Calu3 (cell line): ENCODE measurements at regions of chr14 and their contacts with region 1.

Region 1: DNA sequence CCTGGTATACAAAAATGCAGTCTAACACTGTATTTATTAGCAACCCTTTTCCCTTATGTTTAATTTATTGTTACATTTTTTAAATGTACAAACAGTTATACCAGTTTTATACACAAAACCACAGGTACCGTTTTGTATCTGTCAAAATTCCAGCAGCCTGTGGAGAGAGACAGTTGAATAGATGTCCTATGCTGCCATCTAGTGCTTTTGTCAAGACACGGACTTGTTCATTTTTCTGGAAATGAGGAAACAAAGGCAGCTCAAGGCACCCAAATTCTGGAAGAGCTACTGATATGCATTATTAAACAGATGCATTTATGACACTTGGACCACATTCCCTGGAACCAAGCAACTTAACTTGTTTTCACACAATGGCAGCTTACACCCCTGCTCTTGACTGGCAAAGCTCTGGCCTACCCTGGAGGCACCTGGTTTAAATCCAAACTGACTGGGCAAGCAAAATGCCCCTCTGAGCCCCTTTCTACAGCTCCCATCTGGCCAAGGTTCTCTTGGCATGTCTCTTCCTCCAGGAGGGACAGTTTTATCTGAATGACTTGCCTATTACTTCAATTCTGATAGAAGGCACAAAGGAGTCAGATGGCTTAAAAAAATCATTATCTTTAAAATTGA is 286.9 kb upstream of the PRKD1 start:
- DNase-seq: peak; percentile 32
- H3K4me3 Mint-ChIP-seq: no peak overlapping the region
- H3K27ac Mint-ChIP-seq: no peak overlapping the region
- H3K4me1 Mint-ChIP-seq: no peaks in the 10 kb centered on the region
- H3K27me3 Mint-ChIP-seq: no peaks in the 10 kb centered on the region
- CTCF ChIP-seq: peak; percentile 63

Region 2: GRCh38 chr14:29536886-29537511 is 677.6 kb before region 1 on chr14:
- CTCF ChIA-PET with region 1: interaction called, 6 read pairs
- intact Hi-C with region 1: loop called (anchors 5 kb)
- DNase-seq: peak; percentile 4
- H3K4me3 Mint-ChIP-seq: no peak overlapping the region
- H3K27ac Mint-ChIP-seq: no peak overlapping the region
- H3K4me1 Mint-ChIP-seq: no peaks in the 10 kb centered on the region
- H3K27me3 Mint-ChIP-seq: peaks cover 11% of the 10 kb centered on the region
- CTCF ChIP-seq: peak; percentile 38

Region 3: GRCh38 chr14:30005114-30005808 is 209.3 kb before region 1 on chr14:
- CTCF ChIA-PET with region 1: no interaction called
- intact Hi-C with region 1: loop called (anchors 2 kb)
- DNase-seq: peak; percentile 8
- H3K4me3 Mint-ChIP-seq: no peak overlapping the region
- H3K27ac Mint-ChIP-seq: no peak overlapping the region
- H3K4me1 Mint-ChIP-seq: no peaks in the 10 kb centered on the region
- H3K27me3 Mint-ChIP-seq: no peaks in the 10 kb centered on the region
- CTCF ChIP-seq: peak; percentile 41

Region 4: DNA sequence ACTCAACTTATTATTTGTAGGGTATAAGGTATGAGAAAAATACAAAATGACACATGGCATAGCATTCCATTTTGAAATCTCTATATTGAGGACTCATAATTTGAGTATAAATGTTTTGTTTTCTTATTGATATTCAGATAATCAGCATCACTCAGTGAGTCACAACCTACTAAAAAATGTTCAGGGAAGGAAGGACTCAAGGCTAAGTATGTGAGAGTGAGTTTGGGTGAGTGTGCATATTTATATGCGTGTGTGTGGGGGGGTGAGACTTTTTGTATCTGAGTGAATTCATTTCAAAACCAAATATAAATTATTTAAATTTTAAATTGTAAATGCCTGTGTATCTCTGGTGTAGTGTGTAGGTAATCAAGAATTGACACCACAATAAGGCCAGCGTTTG is 199.1 kb before region 1 on chr14:
- CTCF ChIA-PET with region 1: no interaction called
- intact Hi-C with region 1: loop called (anchors 5 kb)
- DNase-seq: no peak
- H3K4me3 Mint-ChIP-seq: no peak overlapping the region
- H3K27ac Mint-ChIP-seq: no peak overlapping the region
- H3K4me1 Mint-ChIP-seq: no peaks in the 10 kb centered on the region
- H3K27me3 Mint-ChIP-seq: no peaks in the 10 kb centered on the region
- CTCF ChIP-seq: no peak